ENCODE measurements at regions of chr3 and their contacts with region 1.

Region 1: GRCh38 chr3:4290272-4290893 is 12.8 kb upstream of the SETMAR start:
- DNase-seq: no peak
- H3K4me3 ChIP-seq: no peak overlapping the region
- H3K27ac ChIP-seq: no peak overlapping the region
- H3K4me1 ChIP-seq: no peaks in the 10 kb centered on the region
- H3K27me3 ChIP-seq: no peaks in the 10 kb centered on the region
- CTCF ChIP-seq: peak; percentile 76 to 90 (median 87)
- POLR2A ChIP-seq: no peak

Region 2: DNA sequence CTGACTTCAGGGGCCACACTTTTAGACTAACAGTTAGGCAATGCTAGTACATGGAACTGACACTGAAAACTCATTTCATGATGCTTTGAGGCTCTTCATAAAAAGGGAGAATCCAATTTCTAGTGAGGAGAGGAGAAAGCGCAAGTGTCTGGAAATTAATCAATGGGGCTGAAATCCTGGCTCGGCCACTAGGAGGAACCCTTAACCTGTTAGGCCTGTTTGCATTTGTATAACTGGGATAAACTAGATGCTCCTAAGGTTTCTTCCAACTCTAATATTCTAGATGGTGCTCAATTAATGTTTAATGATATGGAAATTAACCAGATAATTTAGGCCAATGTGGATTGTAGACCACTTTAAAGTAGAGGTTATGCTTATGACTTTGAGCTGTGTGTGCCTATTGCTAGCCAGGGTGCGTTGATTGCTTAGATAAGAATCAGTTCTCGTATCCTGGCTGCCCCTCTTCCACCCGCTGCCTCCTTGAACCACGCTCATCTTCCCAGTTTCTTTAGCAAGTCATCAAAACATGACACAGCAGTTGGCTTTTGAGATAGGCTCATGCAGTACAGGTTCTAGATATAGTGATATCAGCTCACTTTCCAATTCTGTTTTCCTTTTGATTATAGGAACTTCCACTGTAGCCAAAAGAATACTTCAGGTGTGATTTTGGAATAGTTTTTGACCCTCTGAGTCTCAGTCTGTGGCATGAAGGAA is 1094.1 kb before region 1 on chr3:
- intact Hi-C with region 1: loop called (anchors 10 kb)
- DNase-seq: no peak
- H3K4me3 ChIP-seq: no peak overlapping the region
- H3K27ac ChIP-seq: no peak overlapping the region
- H3K4me1 ChIP-seq: no peaks in the 10 kb centered on the region
- H3K27me3 ChIP-seq: no peaks in the 10 kb centered on the region
- CTCF ChIP-seq: no peak
- POLR2A ChIP-seq: no peak

Measured in vagina (tissue), 2 donors.